ENCODE measurements at regions of chr12 and their contacts with region 1.

Region 1: DNA sequence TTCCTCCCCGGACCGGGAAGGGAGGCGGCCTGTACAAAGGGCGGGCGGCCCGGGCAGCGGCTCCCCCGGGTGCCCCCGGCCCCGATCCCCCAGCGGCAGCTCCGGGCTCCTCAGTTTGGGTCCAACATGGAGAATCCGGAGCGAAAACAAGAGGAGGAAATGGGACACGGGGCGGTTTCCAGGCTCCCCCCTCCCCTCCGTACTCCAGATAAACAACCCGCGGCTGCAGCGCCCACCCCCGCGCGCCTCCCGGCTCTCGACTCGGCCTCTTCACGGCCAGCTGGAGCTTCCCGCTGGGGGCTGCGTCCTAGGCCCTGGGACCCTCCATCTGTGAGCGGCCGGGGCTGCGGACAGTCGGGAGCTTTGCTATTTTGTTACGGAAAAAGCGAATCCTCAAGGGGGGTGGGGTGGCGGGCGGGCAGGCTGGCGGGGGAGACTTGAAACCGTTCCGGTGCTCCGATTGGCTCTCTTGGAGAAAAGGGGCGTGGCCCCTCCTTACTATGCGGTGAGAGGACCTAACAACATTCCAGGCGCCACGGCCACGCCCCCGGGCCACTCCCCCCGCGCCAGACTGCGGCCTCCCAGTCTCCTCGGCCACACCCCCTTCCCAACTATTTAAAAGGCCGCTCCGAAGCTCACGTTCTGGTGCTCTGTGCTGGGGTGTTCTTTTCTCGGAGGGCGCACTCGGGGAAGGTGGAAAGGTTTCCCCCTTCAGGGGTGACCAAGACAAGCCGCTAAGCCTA is at the start of gene CTDSP2:
- DNase-seq: peak; percentile 99
- H3K4me3 ChIP-seq: peak within 1 kb of the TSS; percentile 98
- H3K4me3 Mint-ChIP-seq: peak within 1 kb of the TSS; percentile 76
- H3K27ac Mint-ChIP-seq: peak within 1 kb of the TSS; percentile 88
- H3K4me1 ChIP-seq: peaks cover 24% of the 10 kb centered on the region
- H3K4me1 Mint-ChIP-seq: peaks cover 20% of the 10 kb centered on the region
- H3K27me3 ChIP-seq: no peaks in the 10 kb centered on the region; the same call in 1 of the 2 replicates
- H3K27me3 Mint-ChIP-seq: peaks cover 3% of the 10 kb centered on the region
- CTCF ChIP-seq: no peak
- total RNA-seq, gene CTDSP2: 103 and 117 TPM in 2 replicates

Region 2: DNA sequence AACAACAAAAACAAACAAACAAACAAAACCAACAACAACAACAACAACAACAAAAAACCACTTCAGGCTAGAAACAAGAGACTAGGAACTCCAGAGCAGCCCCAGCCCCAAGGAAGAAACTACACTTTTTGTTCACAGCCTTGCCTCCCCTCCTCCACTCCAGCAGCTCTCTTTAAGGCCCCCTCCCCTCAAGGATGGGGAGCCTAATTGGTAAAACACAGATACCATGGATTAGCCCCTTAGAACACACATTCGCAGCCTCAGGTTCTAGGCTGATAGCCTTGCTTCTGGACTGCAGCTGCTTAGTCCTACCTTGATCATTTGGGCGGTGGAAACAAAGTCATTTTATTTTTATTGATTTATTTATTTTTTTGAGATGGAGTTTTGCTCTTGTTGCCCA is 16.4 kb before region 1 on chr12:
- CTCF ChIA-PET with region 1: interaction called, 4 read pairs
- POLR2A ChIA-PET with region 1: interaction called, 3 read pairs
- intact Hi-C with region 1: loop called (anchors 1 kb)
- DNase-seq: no peak
- H3K4me3 ChIP-seq: no peak overlapping the region
- H3K4me3 Mint-ChIP-seq: no peak overlapping the region
- H3K27ac Mint-ChIP-seq: no peak overlapping the region
- H3K4me1 ChIP-seq: no peaks in the 10 kb centered on the region
- H3K4me1 Mint-ChIP-seq: peaks cover 11% of the 10 kb centered on the region
- H3K27me3 ChIP-seq: no peaks in the 10 kb centered on the region
- H3K27me3 Mint-ChIP-seq: no peaks in the 10 kb centered on the region
- CTCF ChIP-seq: no peak

Region 3: DNA sequence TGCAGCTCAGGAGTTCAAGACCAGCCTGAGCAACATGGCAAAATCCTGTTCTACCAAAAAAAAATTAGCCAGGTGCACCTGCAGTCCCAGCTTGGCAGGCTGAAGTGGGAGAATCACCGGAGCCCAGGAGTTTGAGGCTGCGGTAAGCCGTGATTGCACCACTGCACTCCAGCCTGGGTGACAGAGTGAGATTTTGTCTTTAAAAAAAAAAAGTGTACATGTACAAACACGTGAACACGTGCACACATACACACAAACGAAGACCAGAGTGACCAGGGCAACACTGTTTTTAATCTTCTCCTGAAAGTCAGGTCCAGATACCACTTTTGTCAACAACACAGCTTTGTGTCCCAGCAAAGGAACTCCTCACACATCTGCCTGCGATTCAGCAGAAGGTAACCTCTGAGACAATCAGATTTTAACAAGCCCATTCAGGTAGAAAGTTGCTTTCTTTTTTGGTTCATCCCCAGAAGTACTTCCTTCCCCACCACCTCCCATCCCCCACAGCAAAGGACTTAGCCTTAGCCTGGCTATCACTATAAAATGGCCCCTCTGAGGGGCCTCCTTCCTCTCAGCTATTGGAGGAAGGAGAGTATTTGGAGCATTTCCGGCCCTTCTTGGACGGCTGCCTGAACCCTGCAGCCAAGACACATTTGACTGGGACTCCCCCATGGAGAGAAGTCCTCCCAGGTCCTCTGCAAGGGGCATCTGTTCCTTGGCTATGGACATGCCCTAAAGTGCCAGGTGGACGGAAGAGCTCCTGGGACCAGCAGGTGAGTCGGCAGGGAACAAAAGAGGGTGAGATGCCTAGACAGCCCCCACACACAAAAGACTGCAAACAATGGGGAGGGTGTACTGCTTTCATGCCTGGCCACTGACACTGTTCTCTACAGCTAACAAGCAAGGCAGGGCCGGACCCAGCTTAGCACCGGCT is 10.0 kb before region 1 on chr12:
- CTCF ChIA-PET with region 1: interaction called, 4 read pairs
- POLR2A ChIA-PET with region 1: interaction called, 3 read pairs
- intact Hi-C with region 1: loop called (anchors 1 kb)
- DNase-seq: no peak
- H3K4me3 ChIP-seq: no peak overlapping the region
- H3K4me3 Mint-ChIP-seq: no peak overlapping the region
- H3K27ac Mint-ChIP-seq: no peak overlapping the region
- H3K4me1 ChIP-seq: peaks cover 20% of the 10 kb centered on the region
- H3K4me1 Mint-ChIP-seq: peaks cover 24% of the 10 kb centered on the region
- H3K27me3 ChIP-seq: no peaks in the 10 kb centered on the region
- H3K27me3 Mint-ChIP-seq: no peaks in the 10 kb centered on the region
- CTCF ChIP-seq: no peak

Region 4: GRCh38 chr12:57865090-57865751 is 18.5 kb after region 1 on chr12:
- CTCF ChIA-PET with region 1: interaction called, 10 read pairs
- POLR2A ChIA-PET with region 1: interaction called, 7 read pairs
- intact Hi-C with region 1: loop called (anchors 1 kb)
- DNase-seq: peak; percentile 66 to 82
- H3K4me3 ChIP-seq: peak overlapping the region; percentile 49
- H3K4me3 Mint-ChIP-seq: peak overlapping the region; percentile 74
- H3K27ac Mint-ChIP-seq: peak overlapping the region; percentile 57
- H3K4me1 ChIP-seq: peaks cover 4% of the 10 kb centered on the region
- H3K4me1 Mint-ChIP-seq: no peaks in the 10 kb centered on the region
- H3K27me3 ChIP-seq: no peaks in the 10 kb centered on the region
- H3K27me3 Mint-ChIP-seq: no peaks in the 10 kb centered on the region
- CTCF ChIP-seq: no peak

Region 5: DNA sequence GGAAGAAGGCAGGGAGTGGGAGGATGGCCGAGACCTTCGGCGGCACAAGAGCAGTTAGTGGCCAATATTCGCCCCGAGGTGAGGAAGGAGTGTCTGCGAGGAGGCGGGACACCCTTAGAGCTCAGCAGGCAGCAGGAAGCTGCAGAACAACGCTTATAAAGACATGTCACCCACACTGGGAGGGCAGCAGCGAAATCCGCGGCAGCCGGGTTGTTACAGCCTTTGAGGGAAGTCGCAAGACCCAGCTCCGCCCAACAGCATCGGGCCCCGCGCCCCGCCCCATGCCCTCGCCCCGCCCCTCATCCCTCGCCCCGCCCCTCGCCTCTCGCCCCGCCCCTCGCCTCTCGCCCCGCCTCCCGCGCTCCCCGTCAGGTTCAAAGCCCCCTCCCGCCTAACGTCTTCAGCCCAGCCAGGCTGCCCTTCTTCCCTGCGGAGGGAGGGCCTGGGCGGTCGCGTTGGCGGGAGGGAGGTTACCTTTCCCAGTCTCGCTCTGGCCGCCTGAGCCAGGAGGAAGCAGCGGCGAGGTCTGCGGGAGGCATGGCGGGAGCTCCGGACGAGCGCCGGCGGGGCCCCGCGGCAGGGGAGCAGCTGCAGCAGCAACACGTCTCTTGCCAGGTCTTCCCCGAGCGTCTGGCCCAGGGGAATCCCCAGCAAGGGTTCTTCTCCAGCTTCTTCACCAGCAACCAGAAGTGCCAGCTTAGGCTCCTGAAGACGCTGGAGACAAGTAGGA is 94.6 kb after region 1 on chr12 and contains the start of gene ATP23:
- CTCF ChIA-PET with region 1: interaction called, 7 read pairs
- POLR2A ChIA-PET with region 1: interaction called, 10 read pairs
- intact Hi-C with region 1: no loop called
- DNase-seq: peak; percentile 95
- H3K4me3 ChIP-seq: peak within 1 kb of the TSS; percentile 53
- H3K4me3 Mint-ChIP-seq: peak within 1 kb of the TSS; percentile 97
- H3K27ac Mint-ChIP-seq: peak within 1 kb of the TSS; percentile 91
- H3K4me1 ChIP-seq: no peaks in the 10 kb centered on the region; the same call in 1 of the 2 replicates
- H3K4me1 Mint-ChIP-seq: peaks cover 8% of the 10 kb centered on the region
- H3K27me3 ChIP-seq: no peaks in the 10 kb centered on the region
- H3K27me3 Mint-ChIP-seq: peaks cover 3% of the 10 kb centered on the region
- CTCF ChIP-seq: no peak
- total RNA-seq, gene ATP23: 6.1 and 6.6 TPM in 2 replicates

Measured in Caco-2 (cell line).